Mammary epithelial cell (primary cell): ENCODE measurements at regions of chr5 and their contacts with region 1.

Region 1: GRCh38 chr5:55439008-55439407 is 95.8 kb downstream of the PLPP1 start:
- DNase-seq: no peak
- H3K4me3 ChIP-seq: no peak overlapping the region
- H3K27ac ChIP-seq: peak overlapping the region; percentile 19
- H3K4me1 ChIP-seq: peaks cover 25% of the 10 kb centered on the region
- H3K27me3 ChIP-seq: no peaks in the 10 kb centered on the region
- CTCF ChIP-seq: no peak

Region 2: GRCh38 chr5:55407059-55407684 is 31.8 kb before region 1 on chr5:
- CTCF ChIA-PET with region 1: no interaction called
- dilution Hi-C with region 1: no loop called
- in situ Hi-C with region 1: no loop called
- intact Hi-C with region 1: no loop called
- DNase-seq: peak; percentile 23
- H3K4me3 ChIP-seq: no peak overlapping the region
- H3K27ac ChIP-seq: no peak overlapping the region
- H3K4me1 ChIP-seq: no peaks in the 10 kb centered on the region
- H3K27me3 ChIP-seq: no peaks in the 10 kb centered on the region
- CTCF ChIP-seq: peak; percentile 68 to 76

Region 3: GRCh38 chr5:55593115-55593472 is 154.1 kb after region 1 on chr5:
- CTCF ChIA-PET with region 1: no interaction called
- dilution Hi-C with region 1: no loop called
- in situ Hi-C with region 1: no loop called
- intact Hi-C with region 1: loop called (anchors 5 kb)
- DNase-seq: peak; percentile 83
- H3K4me3 ChIP-seq: no peak overlapping the region
- H3K27ac ChIP-seq: peak overlapping the region; percentile 0
- H3K4me1 ChIP-seq: peaks cover 24% of the 10 kb centered on the region
- H3K27me3 ChIP-seq: no peaks in the 10 kb centered on the region
- CTCF ChIP-seq: no peak